Activated CD4-positive, alpha-beta memory T cell treated with anti-CD3 and anti-CD28 coated beads, Interleukin-2, amount 10 ng/mL, durations not matched to agents 7 days and 5 days (primary cell): ENCODE measurements at regions of chr13 and their contacts with region 1.

Region 1: DNA sequence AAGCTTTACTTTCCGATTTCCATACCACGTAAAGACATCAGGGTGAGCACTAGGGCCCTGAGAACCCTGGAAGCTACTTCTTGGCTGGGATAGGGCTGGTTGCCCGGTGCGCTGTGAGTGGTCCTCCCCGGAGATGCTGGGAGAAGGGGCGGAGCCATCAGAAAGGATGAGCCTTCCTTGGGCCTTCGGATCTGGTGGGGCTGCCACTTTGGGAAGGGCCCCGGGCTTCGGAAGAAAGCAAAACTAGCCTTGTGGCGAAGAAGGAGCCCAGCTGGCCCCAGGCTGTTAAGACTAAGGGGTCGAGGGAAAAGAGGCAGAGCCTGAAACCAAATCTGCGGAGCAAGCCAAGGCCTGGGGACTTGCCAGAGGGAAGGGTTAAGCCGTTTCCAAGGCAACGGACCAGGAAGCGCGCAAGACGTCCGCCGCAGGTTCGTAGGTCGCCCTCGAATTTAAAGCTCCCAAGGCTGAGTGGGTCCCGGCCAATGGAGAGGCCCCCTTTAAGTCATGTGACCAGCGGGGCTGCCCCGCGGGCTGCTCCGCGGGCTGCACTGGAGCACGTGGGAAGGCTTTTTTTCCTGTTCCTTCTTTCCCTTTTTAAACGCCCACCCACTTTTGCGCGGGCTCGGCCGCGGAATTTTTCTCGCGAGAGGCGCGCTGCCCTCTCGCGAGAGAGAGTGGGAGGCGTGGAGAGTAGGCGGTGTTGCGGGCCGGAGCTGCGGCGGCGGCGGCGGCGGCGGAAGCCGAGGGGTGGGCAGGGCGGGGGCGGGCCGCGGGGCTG is 426 bp upstream of the AKAP11 start:
- DNase-seq: peak; percentile 96
- H3K4me3 Mint-ChIP-seq: peak overlapping the region; percentile 97
- H3K27ac Mint-ChIP-seq: peak overlapping the region; percentile 91
- H3K4me1 Mint-ChIP-seq: peaks cover 47% of the 10 kb centered on the region
- H3K27me3 Mint-ChIP-seq: peaks cover 1% of the 10 kb centered on the region

Region 2: DNA sequence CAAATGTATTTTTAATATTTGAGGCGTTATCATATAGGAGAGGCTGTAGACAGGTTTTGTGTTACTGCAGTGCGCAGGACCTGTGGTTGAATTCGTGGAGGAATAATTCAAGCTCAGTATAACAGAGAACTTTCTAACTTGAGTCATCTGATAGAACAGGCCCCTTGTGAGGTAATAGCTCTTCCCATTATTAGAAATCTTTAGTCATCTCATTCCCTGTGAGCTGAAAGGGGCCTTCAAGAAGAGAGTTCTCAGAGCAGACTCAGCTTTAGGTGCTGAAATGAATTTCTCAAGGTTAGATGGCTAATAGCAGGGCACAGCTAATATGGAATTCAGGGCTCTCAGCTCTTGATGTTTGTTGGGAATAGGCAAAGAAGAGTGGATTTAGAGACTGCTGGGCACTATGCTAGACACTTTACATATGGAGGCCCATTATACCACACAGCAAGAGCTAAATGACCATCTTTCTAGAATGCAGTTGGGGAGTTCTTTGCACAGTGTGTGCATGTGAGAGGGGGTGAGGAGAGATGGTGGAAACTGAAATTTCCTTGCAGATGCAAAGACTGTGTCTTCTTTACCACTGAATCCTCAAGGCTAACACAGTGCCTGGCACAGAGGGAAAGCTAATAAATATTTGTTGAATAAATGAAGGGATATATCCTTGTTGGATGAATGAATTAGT is 133.5 kb before region 1 on chr13:
- CTCF ChIA-PET with region 1: no interaction called
- POLR2A ChIA-PET with region 1: no interaction called
- DNase-seq: no peak
- H3K4me3 Mint-ChIP-seq: no peak overlapping the region
- H3K27ac Mint-ChIP-seq: no peak overlapping the region
- H3K4me1 Mint-ChIP-seq: peaks cover 4% of the 10 kb centered on the region
- H3K27me3 Mint-ChIP-seq: no peaks in the 10 kb centered on the region

Region 3: GRCh38 chr13:42258747-42259146 is 12.8 kb before region 1 on chr13:
- CTCF ChIA-PET with region 1: interaction called, 3 read pairs
- POLR2A ChIA-PET with region 1: interaction called, 12 read pairs
- DNase-seq: no peak
- H3K4me3 Mint-ChIP-seq: no peak overlapping the region
- H3K27ac Mint-ChIP-seq: no peak overlapping the region
- H3K4me1 Mint-ChIP-seq: peaks cover 8% of the 10 kb centered on the region
- H3K27me3 Mint-ChIP-seq: peaks cover 4% of the 10 kb centered on the region

Region 4: DNA sequence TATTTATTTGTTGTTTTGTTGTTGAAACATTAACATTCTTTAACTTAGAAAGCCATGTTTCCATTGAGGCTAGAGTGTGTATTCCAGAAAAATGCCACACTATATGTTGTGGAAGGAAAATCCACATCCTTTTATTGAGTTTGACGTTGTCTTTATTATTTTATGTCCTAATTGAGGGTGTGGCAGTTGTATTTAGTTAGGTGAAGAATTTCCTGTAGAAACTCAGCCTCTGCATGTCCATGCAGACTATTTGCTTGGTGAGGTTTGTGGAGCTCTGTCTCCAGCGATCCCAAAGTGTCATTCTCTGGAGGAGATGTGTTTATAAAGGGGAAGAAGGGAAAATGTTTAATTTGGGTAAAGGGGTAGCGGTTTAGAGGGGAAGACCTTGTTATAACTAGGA is 47.0 kb after region 1 on chr13:
- CTCF ChIA-PET with region 1: no interaction called
- POLR2A ChIA-PET with region 1: interaction called, 11 read pairs
- DNase-seq: no peak
- H3K4me3 Mint-ChIP-seq: no peak overlapping the region
- H3K27ac Mint-ChIP-seq: no peak overlapping the region
- H3K4me1 Mint-ChIP-seq: peaks cover 21% of the 10 kb centered on the region
- H3K27me3 Mint-ChIP-seq: no peaks in the 10 kb centered on the region

Region 5: DNA sequence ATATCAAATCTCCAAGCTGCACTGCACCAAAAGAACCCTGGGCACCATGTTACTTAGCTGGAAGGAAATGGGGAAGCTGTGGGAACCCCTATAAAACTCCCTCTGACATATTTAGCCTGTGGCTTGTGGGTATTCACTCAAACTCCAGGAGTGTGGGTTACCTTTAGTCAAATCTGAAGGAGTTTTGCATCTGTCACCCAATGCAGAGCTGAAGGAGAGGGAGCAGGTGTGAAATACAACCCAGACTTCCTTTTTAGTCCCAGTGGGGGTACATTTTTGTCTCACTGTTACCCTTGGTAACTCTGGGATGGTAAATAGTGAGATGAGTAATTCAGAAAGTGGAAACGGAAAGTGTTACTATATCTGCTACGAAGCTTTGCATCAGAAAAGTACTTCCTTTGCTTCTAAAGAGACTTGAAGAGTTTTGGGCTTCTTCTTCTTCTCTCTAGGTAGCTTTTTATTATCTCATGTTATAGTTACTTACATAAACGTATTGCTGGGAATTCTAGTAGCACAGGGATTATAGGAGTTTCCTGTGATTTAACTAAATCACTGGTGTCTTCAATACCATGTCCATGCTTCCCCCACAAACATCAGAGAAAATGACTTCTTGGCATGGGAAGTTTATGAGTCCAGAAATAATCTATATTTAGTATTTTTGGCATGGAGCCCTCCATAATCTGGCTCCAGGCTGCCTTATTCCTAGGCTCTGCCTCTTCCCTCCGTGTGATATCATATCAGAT is 106.3 kb after region 1 on chr13:
- CTCF ChIA-PET with region 1: no interaction called
- POLR2A ChIA-PET with region 1: interaction called, 12 read pairs
- DNase-seq: peak; percentile 55
- H3K4me3 Mint-ChIP-seq: no peak overlapping the region
- H3K27ac Mint-ChIP-seq: peak overlapping the region; percentile 90
- H3K4me1 Mint-ChIP-seq: peaks cover 70% of the 10 kb centered on the region
- H3K27me3 Mint-ChIP-seq: no peaks in the 10 kb centered on the region

Region 6: DNA sequence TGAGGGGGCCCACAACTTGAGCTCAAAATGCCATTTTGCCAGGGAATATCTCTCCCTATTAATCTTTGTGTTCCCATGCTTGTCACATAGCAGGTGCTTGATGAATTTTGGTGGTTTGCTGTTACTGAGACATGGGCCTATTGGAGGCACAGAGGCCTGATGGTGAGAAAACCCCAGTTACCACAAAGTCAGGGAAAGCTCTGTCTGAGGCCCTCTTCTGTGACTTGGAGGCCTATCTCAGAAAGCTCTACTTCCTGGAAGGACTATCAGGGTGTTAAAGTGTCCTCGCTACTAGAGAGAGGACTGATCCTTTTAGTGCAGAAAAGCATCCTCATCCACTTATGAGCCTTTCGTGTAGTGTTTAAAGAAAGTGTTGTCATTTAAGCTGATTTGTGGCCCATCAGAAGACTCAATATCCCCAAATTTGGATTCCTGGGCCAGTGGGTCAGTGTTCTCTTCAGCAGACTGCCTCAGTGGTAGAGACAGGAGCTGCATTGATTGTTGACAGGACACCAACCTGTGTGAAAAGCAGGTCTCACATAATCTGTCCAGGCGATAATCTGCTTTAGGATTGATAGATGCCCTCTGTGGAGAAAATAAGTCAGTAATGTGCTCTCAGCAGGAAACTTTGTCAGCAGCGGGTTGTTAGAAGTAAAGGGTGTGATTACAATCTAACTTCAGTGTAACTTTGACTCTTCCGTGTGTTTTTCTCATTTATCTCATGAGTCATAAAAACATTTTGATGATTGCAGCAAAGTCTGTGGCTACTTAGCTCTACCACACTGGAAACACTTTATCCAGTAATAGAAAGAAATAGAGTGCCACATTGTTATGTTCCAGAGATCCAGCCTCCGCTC is 121.4 kb after region 1 on chr13:
- CTCF ChIA-PET with region 1: interaction called, 8 read pairs
- POLR2A ChIA-PET with region 1: interaction called, 59 read pairs
- DNase-seq: peak; percentile 66
- H3K4me3 Mint-ChIP-seq: peak overlapping the region; percentile 77
- H3K27ac Mint-ChIP-seq: peak overlapping the region; percentile 99
- H3K4me1 Mint-ChIP-seq: peaks cover 80% of the 10 kb centered on the region
- H3K27me3 Mint-ChIP-seq: no peaks in the 10 kb centered on the region

Region 7: GRCh38 chr13:42497798-42498197 is 226.3 kb after region 1 on chr13:
- CTCF ChIA-PET with region 1: interaction called, 3 read pairs
- POLR2A ChIA-PET with region 1: interaction called, 12 read pairs
- DNase-seq: peak; percentile 49
- H3K4me3 Mint-ChIP-seq: no peak overlapping the region
- H3K27ac Mint-ChIP-seq: peak overlapping the region; percentile 83
- H3K4me1 Mint-ChIP-seq: peaks cover 58% of the 10 kb centered on the region
- H3K27me3 Mint-ChIP-seq: no peaks in the 10 kb centered on the region

Region 8: DNA sequence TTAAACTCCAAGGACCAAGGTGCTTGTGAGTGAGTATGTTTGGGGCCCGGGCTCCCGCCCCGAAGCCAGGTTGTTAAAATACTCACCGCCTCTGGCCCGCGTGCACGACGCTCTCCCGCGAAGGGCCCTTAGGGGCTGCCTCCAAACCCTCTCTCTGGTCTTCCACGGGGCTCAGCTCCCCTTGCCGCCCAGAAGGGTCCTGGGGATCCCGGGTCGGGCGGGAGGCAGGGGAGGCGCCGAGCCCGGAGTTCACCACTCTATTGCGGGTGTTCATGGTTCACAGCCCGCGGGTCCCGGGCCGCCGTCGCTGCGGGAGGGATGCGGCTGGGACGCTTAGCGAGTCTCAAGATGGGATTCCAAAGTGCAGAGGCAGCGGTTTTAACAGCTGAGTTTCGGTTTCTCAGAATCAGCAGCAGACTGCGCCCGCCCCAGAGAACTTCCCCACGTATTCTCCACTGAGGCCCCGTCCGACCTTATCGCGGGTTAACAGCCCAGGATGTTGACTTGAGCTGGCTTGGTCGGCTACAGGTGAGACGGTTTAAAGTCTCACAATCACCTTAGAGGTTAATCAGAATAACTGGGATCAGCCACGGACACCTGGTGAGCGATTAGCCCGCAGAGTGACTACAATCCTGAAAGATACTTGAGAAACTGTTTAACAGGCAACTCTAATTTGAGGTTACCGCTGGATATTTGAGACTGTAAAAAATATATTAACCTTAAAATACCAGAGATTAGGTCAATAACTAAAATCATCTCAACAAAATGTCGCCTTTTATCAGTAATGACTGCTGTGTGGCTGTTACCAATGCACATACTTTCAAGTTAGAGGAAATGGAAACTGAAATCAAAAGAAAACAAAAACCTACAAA is 720.6 kb after region 1 on chr13 and contains the start of gene EPSTI1:
- CTCF ChIA-PET with region 1: no interaction called
- POLR2A ChIA-PET with region 1: interaction called, 19 read pairs
- DNase-seq: peak; percentile 87
- H3K4me3 Mint-ChIP-seq: peak within 1 kb of the TSS; percentile 96
- H3K27ac Mint-ChIP-seq: peak within 1 kb of the TSS; percentile 99
- H3K4me1 Mint-ChIP-seq: peaks cover 65% of the 10 kb centered on the region
- H3K27me3 Mint-ChIP-seq: no peaks in the 10 kb centered on the region
- total RNA-seq, gene EPSTI1: 128 to 135 TPM